ENCODE measurements at regions of chr9 and their contacts with region 1.

Region 1: DNA sequence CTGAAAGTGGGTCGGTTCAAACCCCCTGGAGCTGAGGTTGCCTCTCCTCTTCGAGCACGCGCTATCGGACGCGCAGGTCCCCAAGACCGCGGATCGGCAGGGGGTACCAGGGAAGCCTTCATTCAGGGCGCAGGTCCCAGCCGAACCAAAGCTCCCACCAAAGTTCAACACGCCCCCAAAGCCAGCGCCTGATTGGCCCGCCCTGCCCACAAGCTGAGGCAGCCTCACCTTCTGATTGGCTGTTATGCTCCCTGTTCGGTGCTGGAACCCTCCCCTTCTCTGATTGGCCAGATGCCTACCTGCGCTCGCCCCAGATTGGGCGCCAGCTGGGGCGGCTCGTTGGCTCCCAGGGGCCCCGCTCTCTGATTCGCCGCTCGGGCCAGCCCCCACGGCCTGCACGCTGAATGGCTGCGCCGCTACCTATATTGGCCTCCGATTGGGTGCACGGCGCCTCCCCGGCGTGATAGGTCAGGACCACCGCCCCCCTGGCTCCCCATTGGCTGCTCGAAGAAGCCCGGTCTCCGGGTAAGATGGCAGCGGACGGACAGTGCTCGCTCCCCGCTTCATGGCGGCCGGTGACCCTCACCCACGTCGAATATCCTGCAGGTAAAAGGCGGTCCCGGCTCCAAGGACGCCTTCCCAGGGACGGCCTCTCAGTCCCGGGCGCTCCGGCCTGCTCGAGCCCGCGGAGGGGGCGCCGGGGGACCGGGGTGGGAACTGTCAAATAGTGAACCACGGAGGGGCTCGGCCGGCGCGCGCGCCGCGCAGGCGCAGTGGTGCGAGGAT is at the start of gene DOLPP1:
- DNase-seq: peak; percentile 97 to 99
- H3K4me3 ChIP-seq: peak within 1 kb of the TSS; percentile 80 to 94
- H3K27ac ChIP-seq: peak within 1 kb of the TSS; percentile 57 to 81
- H3K4me1 ChIP-seq: peaks cover 0 to 8% of the 10 kb centered on the region in 2 donors
- H3K27me3 ChIP-seq: no peaks in the 10 kb centered on the region
- CTCF ChIP-seq: no peak
- total RNA-seq, gene DOLPP1: 41.7 TPM

Region 2: GRCh38 chr9:128875790-128876160 is 205.0 kb before region 1 on chr9:
- intact Hi-C with region 1: no loop called
- DNase-seq: no peak
- H3K4me3 ChIP-seq: no peak overlapping the region
- H3K27ac ChIP-seq: peak overlapping the region; percentile 37 to 71
- H3K4me1 ChIP-seq: peaks cover 4 to 21% of the 10 kb centered on the region in 2 donors
- H3K27me3 ChIP-seq: no peaks in the 10 kb centered on the region
- CTCF ChIP-seq: no peak

Region 3: GRCh38 chr9:129110740-129111527 is 30.1 kb after region 1 on chr9 and contains the starts of genes CRAT and PTPA:
- intact Hi-C with region 1: loop called (anchors 2 kb)
- DNase-seq: peak; percentile 86 to 98
- H3K4me3 ChIP-seq: peak within 1 kb of the TSS; percentile 78 to 83
- H3K27ac ChIP-seq: peak within 1 kb of the TSS; percentile 88 to 91
- H3K4me1 ChIP-seq: peaks cover 7 to 22% of the 10 kb centered on the region in 2 donors
- H3K27me3 ChIP-seq: no peaks in the 10 kb centered on the region
- CTCF ChIP-seq: no peak
- total RNA-seq, gene CRAT: 110 TPM
- total RNA-seq, gene PTPA: 61.6 TPM